ENCODE measurements at regions of chr20 and their contacts with region 1.

Region 1: DNA sequence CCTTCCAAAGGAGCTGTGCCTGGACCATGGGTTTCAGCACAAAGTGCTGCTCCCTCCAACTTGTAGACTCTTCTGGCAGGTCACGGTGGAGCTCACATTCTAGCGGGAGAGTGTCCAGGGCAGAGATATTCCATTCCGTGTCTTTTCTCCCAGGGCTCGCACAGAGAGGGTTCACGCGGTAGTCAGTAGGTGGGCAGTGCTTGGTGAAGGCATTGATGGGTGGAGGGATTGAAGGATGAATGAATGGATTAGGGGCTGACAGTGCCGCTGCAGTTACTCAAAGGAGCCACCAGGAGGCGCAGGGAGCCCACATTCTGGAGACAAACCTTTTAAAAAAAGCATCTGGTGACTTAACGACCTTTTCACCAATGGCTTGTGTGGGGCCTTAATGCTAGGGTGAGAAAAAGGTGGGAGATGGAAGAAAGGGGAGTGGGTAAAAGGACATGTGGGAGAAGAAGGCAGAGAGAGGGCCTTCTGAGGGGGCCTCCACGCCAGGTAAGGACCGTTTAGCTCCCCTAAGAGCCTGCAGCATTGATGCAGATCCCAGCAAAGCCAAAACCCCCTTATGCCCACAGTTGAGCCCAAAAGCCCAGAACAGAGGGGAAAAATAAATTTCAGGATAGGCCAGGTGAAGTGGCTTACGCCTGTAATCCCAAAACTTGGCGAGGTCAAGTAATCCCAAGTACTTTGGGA is 17.5 kb upstream of the FAM110A start:
- DNase-seq: peak; percentile 49
- H3K4me3 ChIP-seq: no peak overlapping the region
- H3K27ac ChIP-seq: no peak overlapping the region
- H3K4me1 ChIP-seq: no peaks in the 10 kb centered on the region
- H3K27me3 ChIP-seq: no peaks in the 10 kb centered on the region
- CTCF ChIP-seq: peak; percentile 99

Region 2: GRCh38 chr20:956330-956951 is 140.4 kb after region 1 on chr20:
- intact Hi-C with region 1: loop called (anchors 1 kb)
- DNase-seq: peak; percentile 68
- H3K4me3 ChIP-seq: no peak overlapping the region
- H3K27ac ChIP-seq: no peak overlapping the region
- H3K4me1 ChIP-seq: no peaks in the 10 kb centered on the region
- H3K27me3 ChIP-seq: no peaks in the 10 kb centered on the region
- CTCF ChIP-seq: peak; percentile 98

Region 3: GRCh38 chr20:1108437-1108920 is 292.4 kb after region 1 on chr20:
- intact Hi-C with region 1: loop called (anchors 5 kb)
- DNase-seq: peak; percentile 66
- H3K4me3 ChIP-seq: no peak overlapping the region
- H3K27ac ChIP-seq: no peak overlapping the region
- H3K4me1 ChIP-seq: no peaks in the 10 kb centered on the region
- H3K27me3 ChIP-seq: no peaks in the 10 kb centered on the region
- CTCF ChIP-seq: peak; percentile 67

Region 4: DNA sequence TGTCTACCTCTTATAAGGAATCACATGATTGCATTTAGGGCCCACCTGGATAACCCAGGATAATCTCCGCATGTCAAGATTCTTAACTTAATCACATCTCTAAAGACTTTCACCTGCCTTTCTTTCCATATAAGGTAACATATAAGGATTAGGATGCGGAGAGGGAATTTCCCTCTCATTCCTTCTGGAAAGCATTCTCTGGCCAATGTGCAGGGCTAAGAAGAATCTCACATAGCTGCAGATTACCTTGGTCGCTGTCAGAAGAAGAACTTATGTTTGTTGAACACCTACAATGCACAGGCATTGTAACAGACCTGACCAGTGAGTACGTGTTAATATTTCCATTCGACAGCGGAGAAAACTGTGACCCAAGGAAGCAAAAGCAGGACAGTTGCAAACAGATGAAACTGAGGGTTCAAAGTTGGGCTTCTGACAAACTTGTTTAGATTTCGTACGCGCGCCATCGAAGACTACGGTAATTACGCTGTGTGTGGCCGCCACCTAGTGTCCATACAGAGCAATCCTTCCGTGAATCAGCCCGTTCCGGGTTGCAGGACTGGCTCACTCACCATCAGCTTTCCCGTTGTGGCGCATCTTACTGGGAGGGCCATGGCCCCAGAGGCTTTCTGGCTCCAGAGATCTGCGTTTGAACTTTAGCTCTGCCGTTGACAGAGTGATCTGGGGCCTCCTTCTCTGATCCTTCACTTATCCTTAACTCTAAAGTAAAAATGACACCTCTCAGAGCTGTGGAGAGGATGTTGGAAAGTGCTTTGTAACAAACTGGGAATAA is 396.7 kb after region 1 on chr20:
- intact Hi-C with region 1: loop called (anchors 5 kb)
- DNase-seq: peak; percentile 71
- H3K4me3 ChIP-seq: no peak overlapping the region
- H3K27ac ChIP-seq: no peak overlapping the region
- H3K4me1 ChIP-seq: no peaks in the 10 kb centered on the region
- H3K27me3 ChIP-seq: no peaks in the 10 kb centered on the region
- CTCF ChIP-seq: peak; percentile 79

Region 5: DNA sequence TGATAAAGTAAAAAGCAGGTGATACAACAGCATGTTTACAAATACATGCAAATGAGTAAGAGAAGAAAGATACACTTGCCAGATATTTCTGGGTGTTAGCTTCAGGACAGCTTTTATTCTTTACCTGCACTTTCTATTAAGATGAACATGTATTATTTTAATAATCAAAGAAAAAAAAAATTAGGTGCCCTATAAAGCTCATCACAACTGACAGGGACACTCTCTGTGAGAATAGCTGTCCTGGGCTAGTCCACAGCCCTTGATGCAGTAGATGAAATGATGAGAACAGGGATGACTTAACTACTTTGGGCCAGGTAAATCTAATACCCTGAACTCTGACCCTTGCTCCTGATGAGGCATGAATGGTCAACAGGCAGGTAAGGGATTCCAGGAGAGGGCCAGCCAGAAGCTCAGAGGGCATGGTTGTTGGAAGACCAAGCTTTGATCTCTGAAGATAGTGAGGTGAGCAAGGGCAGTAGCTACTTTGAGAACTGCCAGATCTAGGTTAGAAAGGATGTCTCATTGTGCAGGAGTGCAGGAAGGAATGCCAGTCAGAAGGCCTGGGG is 634.9 kb after region 1 on chr20:
- intact Hi-C with region 1: no loop called
- DNase-seq: no peak
- H3K4me3 ChIP-seq: no peak overlapping the region
- H3K27ac ChIP-seq: no peak overlapping the region
- H3K4me1 ChIP-seq: no peaks in the 10 kb centered on the region
- H3K27me3 ChIP-seq: no peaks in the 10 kb centered on the region
- CTCF ChIP-seq: no peak